ENCODE measurements at regions of chr13 and their contacts with region 1.

Region 1: DNA sequence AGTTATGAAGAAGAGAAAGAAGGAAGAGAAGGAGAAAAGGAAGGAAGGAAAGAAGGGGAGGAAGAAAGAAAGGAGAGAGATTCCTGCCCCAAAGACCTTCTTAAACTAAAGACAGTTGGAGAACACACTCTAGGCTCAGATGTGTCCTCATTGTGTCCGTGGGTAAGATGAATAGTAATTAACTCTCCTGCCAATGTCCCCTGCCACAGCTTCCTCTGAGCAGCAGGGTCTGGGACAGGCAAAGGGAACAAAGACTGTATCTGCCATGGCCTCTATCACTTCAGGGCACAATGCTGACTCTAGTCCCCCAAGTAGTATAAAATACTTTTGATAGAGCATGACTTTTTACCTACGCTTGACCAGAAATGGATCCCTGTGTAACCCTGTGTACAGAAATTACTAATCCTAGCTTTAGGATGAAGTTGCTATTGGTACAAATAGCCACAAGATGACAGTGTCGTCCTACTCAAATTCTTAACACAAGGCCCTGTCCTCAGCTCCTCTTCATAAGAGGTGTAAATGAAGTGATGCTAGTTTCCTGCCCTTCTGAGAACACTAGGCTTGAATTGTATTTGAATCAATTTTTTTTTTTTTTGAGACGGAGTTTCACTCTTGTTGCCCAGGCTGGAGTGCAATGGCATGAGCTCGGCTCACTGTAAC is 186.2 kb upstream of the GPR12 start:
- DNase-seq: no peak
- H3K4me3 Mint-ChIP-seq: no peak overlapping the region
- H3K27ac Mint-ChIP-seq: no peak overlapping the region
- H3K4me1 Mint-ChIP-seq: no peaks in the 10 kb centered on the region
- H3K27me3 Mint-ChIP-seq: peaks cover 17% of the 10 kb centered on the region

Region 2: DNA sequence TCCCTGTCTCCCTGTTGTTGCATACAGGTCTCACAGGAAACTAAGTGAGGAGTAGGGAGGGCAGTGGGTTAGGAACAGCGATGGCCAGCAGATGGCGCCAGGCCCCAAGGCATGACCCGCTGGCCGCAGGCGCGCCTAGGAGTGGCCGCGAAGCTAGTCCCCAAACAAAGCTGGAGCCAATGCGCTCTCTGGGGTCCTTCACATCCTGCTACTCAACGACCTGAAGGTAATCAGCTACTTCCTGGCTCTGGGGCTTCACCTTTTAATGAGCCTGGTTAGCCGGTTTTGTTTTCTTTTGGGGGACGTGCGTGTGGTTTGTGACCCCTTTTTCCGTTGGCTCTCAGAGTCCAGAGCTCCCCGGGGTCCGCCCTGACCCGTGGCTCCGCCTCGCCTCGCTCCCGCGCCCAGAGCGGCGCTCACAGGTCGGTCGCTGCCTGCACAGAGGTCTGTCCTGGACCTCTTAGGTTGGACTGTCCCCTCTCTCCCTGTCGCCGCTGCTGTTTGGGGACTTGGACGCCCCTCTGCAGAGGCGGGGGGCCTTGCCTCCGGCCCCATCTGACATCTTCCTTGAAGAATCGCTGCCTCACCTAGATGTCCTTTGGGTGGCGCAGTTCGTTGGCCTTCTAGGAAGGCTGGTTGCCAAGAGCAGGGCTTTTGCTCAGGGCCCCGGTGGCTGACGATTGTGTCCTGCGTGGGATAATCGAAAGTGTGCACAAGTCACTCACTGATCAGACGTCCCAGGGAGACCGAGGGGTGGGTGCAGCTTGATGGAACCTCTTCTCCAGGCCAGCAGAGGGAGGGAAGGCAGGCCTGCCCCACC is 415.5 kb after region 1 on chr13:
- intact Hi-C with region 1: loop called (anchors 1 kb)
- DNase-seq: peak; percentile 71
- H3K4me3 Mint-ChIP-seq: peak overlapping the region; percentile 49
- H3K27ac Mint-ChIP-seq: no peak overlapping the region
- H3K4me1 Mint-ChIP-seq: no peaks in the 10 kb centered on the region
- H3K27me3 Mint-ChIP-seq: peaks cover 25% of the 10 kb centered on the region

Measured in activated T-helper 1 cell treated with anti-CD3 and anti-CD28 coated beads, Interleukin-12 subunit alpha, Interleukin-12 subunit beta, Interleukin-2, Interleukin-4 antibody, amounts not matched to agents 30 ng/mL and 10 ng/mL and 1 ng/mL, durations not matched to agents 14 hours and 24 hours and 36 hours (primary cell).